ENCODE measurements at regions of chr18 and their contacts with region 1.

Region 1: GRCh38 chr18:47870605-47871004 is 59.9 kb downstream of the SMAD2 start:
- DNase-seq: no peak
- H3K4me3 Mint-ChIP-seq: no peak overlapping the region
- H3K27ac Mint-ChIP-seq: peak overlapping the region; percentile 70
- H3K4me1 Mint-ChIP-seq: peaks cover 33% of the 10 kb centered on the region
- H3K27me3 Mint-ChIP-seq: no peaks in the 10 kb centered on the region

Region 2: DNA sequence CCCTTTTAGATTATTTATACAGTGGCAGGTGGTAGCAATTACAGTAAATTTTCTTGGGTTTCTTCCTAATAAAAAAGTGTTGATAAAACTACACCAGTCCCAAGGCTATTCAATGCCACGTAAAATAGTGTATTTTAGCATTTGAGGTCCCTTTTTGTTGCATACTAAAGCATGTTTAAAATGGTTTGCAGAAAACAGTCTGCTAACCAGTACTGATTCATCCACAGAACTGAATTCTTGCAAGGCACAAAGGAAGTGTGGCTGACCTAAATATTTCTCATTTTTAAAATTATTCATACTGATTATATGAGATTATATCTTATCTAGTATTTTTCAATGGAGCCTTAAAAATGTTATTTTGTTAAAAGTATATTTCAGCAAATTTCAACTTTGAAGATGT is 38.3 kb before region 1 on chr18:
- intact Hi-C with region 1: loop called (anchors 5 kb)
- DNase-seq: no peak
- H3K4me3 Mint-ChIP-seq: no peak overlapping the region
- H3K27ac Mint-ChIP-seq: no peak overlapping the region
- H3K4me1 Mint-ChIP-seq: peaks cover 10% of the 10 kb centered on the region
- H3K27me3 Mint-ChIP-seq: no peaks in the 10 kb centered on the region

Region 3: GRCh38 chr18:47883771-47884413 is 13.3 kb after region 1 on chr18:
- intact Hi-C with region 1: no loop called
- DNase-seq: no peak
- H3K4me3 Mint-ChIP-seq: no peak overlapping the region
- H3K27ac Mint-ChIP-seq: peak overlapping the region; percentile 63
- H3K4me1 Mint-ChIP-seq: peaks cover 37% of the 10 kb centered on the region
- H3K27me3 Mint-ChIP-seq: no peaks in the 10 kb centered on the region

Region 4: DNA sequence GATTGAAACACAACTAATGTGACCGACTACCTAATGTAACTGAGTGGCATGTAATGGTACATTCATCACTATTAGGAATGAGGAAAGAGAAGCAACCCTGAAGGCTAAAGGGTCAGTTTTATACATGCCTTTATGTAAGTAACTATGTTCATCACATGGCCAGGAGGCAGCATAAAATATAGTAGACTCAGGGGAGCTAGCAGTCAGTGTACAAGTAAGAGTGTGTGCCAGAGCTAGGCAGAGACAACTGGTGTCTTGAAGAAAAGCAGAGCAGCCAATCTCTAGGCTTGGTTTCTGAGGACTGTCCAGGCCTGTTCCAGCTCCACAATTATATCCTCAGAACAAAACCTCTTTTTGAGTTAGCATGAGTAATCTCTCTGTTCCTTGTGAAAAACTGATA is 41.7 kb after region 1 on chr18:
- intact Hi-C with region 1: loop called (anchors 5 kb)
- DNase-seq: peak; percentile 58
- H3K4me3 Mint-ChIP-seq: peak overlapping the region; percentile 64
- H3K27ac Mint-ChIP-seq: peak overlapping the region; percentile 93
- H3K4me1 Mint-ChIP-seq: peaks cover 65% of the 10 kb centered on the region
- H3K27me3 Mint-ChIP-seq: no peaks in the 10 kb centered on the region

Region 5: DNA sequence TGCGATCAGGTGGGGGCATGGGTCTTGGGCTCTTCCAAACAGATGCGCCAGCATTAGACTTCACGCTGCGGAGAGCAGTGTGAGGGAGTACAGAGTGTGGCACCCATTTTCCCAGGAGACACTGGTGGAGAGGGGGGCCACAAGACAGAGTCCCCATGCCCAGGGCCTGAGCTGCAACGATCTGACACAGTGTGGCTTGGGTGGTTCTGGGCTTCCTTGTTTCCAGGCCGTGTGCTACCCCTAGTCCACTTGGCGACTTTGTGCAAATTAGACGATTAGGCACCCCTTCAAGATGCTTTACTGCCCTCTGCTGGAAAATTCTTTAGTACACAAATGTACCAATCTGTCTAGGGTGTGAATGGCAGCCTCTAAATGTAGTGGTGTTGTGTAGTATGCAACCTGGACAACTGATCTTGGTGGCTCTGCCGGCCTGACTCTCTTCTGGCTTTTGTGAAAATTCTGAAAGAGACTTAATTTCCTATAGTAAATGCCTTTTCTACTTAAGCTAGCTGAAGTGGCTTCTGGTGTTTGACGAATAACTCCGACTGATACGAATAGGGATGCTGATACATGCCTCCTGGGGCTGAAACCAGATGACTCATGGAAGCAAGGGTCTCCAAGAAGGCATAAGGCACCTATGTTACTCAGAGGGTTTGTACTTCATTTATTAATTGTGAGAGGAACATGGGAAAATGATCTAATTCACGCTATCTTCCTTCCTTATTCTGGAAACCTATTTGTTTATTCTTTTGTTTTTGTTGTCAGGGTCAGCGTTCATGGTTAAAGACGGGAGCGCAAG is 152.1 kb after region 1 on chr18:
- intact Hi-C with region 1: loop called (anchors 5 kb)
- DNase-seq: peak; percentile 78
- H3K4me3 Mint-ChIP-seq: no peak overlapping the region
- H3K27ac Mint-ChIP-seq: no peak overlapping the region
- H3K4me1 Mint-ChIP-seq: peaks cover 7% of the 10 kb centered on the region
- H3K27me3 Mint-ChIP-seq: peaks cover 19% of the 10 kb centered on the region

Region 6: DNA sequence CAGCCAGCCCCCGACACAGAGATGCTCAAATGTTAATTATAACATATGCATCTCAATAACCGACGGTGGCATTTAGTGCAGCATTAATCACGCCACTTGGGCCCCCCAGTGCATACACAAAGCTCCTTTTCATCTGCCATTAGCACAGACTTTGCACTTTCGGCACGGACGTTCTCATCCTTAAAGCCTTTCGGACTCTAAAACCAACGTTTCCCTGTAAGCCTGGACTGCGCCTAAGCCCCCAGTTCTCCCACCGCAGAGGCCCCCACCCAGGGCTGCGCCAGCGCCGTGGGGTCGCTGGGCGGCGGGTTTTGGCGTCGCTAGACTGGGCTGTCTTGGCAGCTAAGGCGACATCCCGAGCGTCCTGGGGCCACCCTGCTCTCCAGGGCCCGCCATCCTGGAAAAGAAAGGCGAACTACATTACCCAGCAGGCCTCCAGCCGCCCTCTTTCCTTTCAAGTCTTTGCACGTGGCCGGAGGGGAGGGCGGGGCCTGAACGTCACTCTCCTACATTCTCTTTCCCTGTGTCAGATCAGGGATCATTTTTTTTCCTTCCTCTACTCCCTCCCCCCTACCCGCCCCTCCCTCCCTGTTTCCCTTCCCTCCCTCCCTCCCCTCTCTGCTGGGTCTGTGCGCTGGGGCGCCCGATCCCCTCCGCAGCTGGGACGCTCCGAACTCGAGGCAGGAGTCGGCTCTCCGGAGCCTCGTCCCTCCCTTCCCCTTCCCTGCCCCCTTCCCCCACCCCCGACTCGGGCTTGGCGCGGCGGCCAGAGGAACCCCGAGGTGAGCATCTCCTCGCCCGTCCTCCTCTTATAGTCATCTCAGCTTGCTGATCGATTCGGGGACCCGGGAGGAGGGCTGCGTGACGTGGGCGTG is 668.2 kb after region 1 on chr18 and contains the start of gene CTIF:
- intact Hi-C with region 1: no loop called
- DNase-seq: peak; percentile 91
- H3K4me3 Mint-ChIP-seq: peak within 1 kb of the TSS; percentile 84
- H3K27ac Mint-ChIP-seq: peak within 1 kb of the TSS; percentile 72
- H3K4me1 Mint-ChIP-seq: peaks cover 14% of the 10 kb centered on the region
- H3K27me3 Mint-ChIP-seq: peaks cover 23% of the 10 kb centered on the region
- total RNA-seq, gene CTIF: 6.5 and 9.5 TPM in 2 replicates